ENCODE measurements at regions of chr5 and their contacts with region 1.

Region 1: DNA sequence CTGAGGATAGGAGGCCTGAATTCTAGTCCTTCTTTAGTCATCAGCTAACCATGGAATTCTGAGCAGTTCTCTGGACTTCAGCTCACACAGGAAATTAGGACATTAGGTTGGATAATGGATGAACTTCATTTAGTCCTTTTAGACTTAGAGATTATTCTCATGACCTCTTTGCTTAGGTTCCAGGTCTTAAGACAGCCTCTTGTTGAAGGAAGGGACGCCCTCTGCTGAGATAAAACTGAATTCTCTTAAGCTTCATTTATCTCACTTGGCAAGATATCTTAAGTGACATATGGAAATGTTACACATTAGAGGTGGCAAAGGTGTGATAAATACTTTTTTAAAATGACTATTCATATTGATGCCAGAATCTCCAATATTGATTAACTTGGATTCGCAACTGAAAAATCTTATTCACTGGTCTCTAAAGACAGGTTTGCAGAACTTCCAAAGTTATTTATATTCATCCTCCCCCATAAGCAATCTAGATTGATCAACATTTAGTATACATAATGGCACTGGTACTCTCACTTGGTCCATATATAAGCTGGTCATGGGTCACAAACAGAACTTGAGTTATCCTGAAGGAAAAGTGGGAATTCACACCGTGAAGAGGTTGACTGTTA is 16.9 kb upstream of the ZNF366 start:
- DNase-seq: no peak
- H3K4me3 ChIP-seq: no peak overlapping the region
- H3K27ac ChIP-seq: no peak overlapping the region
- H3K4me1 ChIP-seq: peaks cover 0 to 6% (median 2%) of the 10 kb centered on the region in 6 donors
- H3K27me3 ChIP-seq: no peaks in the 10 kb centered on the region
- CTCF ChIP-seq: peak in 10 of 11 experiments; percentile 15 to 77 (median 56)
- POLR2A ChIP-seq: no peak

Region 2: GRCh38 chr5:71719063-71719964 is 804.8 kb before region 1 on chr5 and contains the start of gene CARTPT:
- intact Hi-C with region 1: no loop called
- DNase-seq: no peak
- H3K4me3 ChIP-seq: no peak within 1 kb of the TSS
- H3K27ac ChIP-seq: no peak within 1 kb of the TSS
- H3K4me1 ChIP-seq: peaks cover 0 to 2% (median 0%) of the 10 kb centered on the region in 6 donors
- H3K27me3 ChIP-seq: peaks cover 0 to 90% (median 26%) of the 10 kb centered on the region in 7 donors
- CTCF ChIP-seq: no peak
- POLR2A ChIP-seq: no peak
- total RNA-seq, gene CARTPT: not detected

Region 3: GRCh38 chr5:72210888-72211678 is 313.0 kb before region 1 on chr5:
- intact Hi-C with region 1: no loop called
- DNase-seq: no peak
- H3K4me3 ChIP-seq: no peak overlapping the region
- H3K27ac ChIP-seq: peak overlapping the region in 7 of 8 donors; percentile 11 to 59 (median 52)
- H3K4me1 ChIP-seq: peaks cover 0 to 12% (median 0%) of the 10 kb centered on the region in 6 donors
- H3K27me3 ChIP-seq: no peaks in the 10 kb centered on the region
- CTCF ChIP-seq: no peak
- POLR2A ChIP-seq: no peak

Region 4: GRCh38 chr5:72366324-72366976 is 157.6 kb before region 1 on chr5:
- intact Hi-C with region 1: loop called (anchors 5 kb)
- DNase-seq: no peak
- H3K4me3 ChIP-seq: no peak overlapping the region
- H3K27ac ChIP-seq: peak overlapping the region in 1 of 8 donors; percentile 30
- H3K4me1 ChIP-seq: peaks cover 0 to 48% (median 24%) of the 10 kb centered on the region in 6 donors
- H3K27me3 ChIP-seq: no peaks in the 10 kb centered on the region
- CTCF ChIP-seq: peak; percentile 58 to 89 (median 78)
- POLR2A ChIP-seq: no peak

Measured in spleen (tissue), 13 donors.